MCF 10A (cell line): ENCODE measurements at regions of chr5 and their contacts with region 1.

Region 1: DNA sequence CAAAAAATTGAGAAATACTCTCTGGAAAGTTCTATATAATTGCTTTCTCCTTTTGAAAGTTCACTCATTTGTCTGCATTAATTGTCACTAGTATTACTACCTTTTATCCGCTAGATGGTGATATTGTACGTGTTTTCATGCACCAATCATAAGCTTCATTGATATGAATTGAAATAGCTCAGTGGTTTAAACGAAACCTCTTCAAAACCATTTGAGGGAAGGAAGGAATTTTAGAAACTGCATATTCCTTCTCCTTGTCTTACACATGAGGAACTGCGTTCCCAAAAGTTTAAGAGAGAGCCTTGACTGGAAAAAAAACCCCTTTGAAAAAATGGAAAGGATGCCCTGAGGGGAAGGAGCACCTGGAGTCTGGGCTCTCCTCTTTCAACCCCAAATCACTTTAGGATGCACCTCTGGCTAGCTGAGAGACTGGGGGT is 98.6 kb downstream of the YTHDC2 start:
- DNase-seq: peak; percentile 49
- H3K4me3 Mint-ChIP-seq: no peak overlapping the region
- H3K27ac Mint-ChIP-seq: no peak overlapping the region
- H3K4me1 Mint-ChIP-seq: peaks cover 5% of the 10 kb centered on the region
- H3K27me3 Mint-ChIP-seq: peaks cover 21% of the 10 kb centered on the region
- CTCF ChIP-seq: peak; percentile 61

Region 2: GRCh38 chr5:113425914-113426313 is 186.2 kb before region 1 on chr5:
- CTCF ChIA-PET with region 1: no interaction called
- POLR2A ChIA-PET with region 1: no interaction called
- intact Hi-C with region 1: no loop called
- DNase-seq: no peak
- H3K4me3 Mint-ChIP-seq: no peak overlapping the region
- H3K27ac Mint-ChIP-seq: no peak overlapping the region
- H3K4me1 Mint-ChIP-seq: peaks cover 17% of the 10 kb centered on the region
- H3K27me3 Mint-ChIP-seq: no peaks in the 10 kb centered on the region
- CTCF ChIP-seq: no peak

Region 3: DNA sequence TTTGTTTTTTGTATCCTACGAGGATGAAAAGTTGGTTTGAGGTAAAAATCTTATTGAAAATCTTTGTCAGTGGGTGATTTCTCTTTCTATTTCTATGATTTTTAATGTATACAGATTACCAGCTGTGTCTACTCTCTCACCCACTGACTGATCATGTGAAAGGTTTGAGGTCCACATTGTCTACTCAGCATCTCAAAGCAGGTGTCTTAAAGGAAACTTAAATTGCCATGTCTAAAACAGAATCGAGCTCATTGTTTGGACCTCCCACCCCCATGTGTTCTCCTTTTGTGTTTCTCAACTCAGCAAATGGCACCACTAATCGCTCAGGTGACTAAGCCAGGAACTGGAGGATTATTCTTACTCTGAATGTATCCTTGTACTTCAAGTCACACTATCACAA is 22.9 kb after region 1 on chr5:
- CTCF ChIA-PET with region 1: no interaction called
- POLR2A ChIA-PET with region 1: no interaction called
- intact Hi-C with region 1: no loop called
- DNase-seq: no peak
- H3K4me3 Mint-ChIP-seq: no peak overlapping the region
- H3K27ac Mint-ChIP-seq: no peak overlapping the region
- H3K4me1 Mint-ChIP-seq: no peaks in the 10 kb centered on the region
- H3K27me3 Mint-ChIP-seq: peaks cover 57% of the 10 kb centered on the region
- CTCF ChIP-seq: no peak

Region 4: DNA sequence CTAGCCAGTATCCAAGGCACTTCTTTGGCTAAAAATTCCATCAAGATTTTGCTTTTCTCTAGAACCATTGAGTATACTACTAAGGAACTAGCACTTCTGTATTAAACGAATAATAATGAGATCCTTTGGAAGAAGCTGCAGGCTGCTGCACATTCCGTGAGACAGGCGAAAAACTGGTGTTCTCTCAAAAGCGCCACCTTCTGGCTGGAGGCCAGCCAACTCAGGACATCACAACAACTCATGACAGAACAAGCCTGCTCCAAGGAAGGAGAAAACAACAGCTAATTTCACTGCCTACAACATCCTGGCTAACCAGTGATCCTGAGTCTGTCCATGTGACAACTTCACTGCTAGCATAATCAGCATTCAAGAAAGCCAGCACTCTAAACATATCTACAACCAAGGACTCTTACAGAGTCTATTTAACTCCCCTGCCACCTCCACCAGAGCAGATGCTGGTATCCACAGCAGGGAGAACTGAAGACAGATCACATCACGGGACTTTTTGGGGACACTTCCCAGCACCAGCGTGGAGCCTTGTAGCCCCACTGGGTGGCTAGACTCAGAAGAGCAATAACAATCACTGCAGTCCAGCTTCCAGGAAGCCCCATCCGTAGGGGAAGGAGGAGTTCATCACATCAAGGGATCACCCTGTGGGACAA is 51.9 kb after region 1 on chr5:
- CTCF ChIA-PET with region 1: interaction called, 9 read pairs
- POLR2A ChIA-PET with region 1: no interaction called
- intact Hi-C with region 1: loop called (anchors 1 kb)
- DNase-seq: peak; percentile 79
- H3K4me3 Mint-ChIP-seq: no peak overlapping the region
- H3K27ac Mint-ChIP-seq: no peak overlapping the region
- H3K4me1 Mint-ChIP-seq: peaks cover 5% of the 10 kb centered on the region
- H3K27me3 Mint-ChIP-seq: peaks cover 76% of the 10 kb centered on the region
- CTCF ChIP-seq: peak; percentile 31

Region 5: DNA sequence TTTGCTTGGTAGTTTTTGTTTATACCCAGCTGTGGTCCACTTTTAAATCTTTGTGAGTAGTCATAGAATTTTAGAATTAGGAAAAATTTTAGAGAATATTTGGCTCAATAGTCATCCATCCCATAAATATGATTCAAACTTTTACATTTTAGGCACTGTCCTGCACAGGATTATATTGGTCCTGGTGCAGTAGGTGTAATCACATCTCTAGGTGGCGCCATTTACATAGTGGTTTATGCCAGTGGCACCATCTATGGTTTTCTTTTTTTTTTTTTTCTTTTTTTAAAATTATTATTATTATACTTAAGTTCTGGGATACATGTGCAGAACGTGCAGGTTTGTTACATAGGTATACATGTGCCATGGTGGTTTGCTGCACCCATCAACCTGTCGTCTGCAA is 489.1 kb after region 1 on chr5:
- CTCF ChIA-PET with region 1: no interaction called
- POLR2A ChIA-PET with region 1: no interaction called
- intact Hi-C with region 1: loop called (anchors 1 kb)
- DNase-seq: peak; percentile 54
- H3K4me3 Mint-ChIP-seq: no peak overlapping the region
- H3K27ac Mint-ChIP-seq: no peak overlapping the region
- H3K4me1 Mint-ChIP-seq: no peaks in the 10 kb centered on the region
- H3K27me3 Mint-ChIP-seq: peaks cover 60% of the 10 kb centered on the region
- CTCF ChIP-seq: peak; percentile 52

Region 6: DNA sequence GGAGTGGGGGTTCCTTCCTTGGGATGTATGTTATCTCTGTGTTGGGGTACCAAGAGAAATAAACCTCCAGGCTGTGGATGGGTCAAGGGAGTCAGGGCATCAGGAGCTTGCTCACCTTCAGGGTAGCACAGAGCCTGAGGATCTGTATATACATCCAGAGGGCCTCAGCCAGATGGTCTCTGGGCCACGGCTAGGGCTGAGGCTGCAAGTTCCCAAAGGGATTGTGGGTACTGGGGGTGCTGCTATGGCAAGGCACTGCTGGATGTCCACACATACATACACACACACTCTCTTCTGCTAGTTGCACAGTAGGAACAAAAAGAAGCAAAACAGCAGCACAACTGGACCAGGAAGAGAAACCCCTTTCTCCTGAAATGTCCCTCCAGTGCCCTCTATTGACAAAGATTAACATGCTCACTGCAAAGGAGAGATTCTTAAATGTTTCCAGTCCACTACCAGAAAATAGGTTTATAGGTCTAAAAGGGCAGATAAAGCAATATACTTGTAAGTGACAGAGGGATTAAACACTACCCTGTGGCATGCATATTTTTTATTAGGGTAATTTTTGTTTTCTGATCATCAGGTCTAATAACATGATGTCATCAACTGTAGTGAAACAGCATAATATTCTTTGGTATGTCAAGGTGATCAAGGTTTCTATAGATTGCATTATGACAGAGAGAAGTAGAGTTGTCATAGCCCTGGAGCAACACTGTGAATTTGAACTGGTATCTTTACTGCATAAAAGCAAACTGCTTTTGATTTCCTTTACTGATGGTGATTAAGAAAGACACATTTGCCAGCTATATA is 693.5 kb after region 1 on chr5:
- CTCF ChIA-PET with region 1: no interaction called
- POLR2A ChIA-PET with region 1: no interaction called
- intact Hi-C with region 1: loop called (anchors 5 kb)
- DNase-seq: peak; percentile 29
- H3K4me3 Mint-ChIP-seq: no peak overlapping the region
- H3K27ac Mint-ChIP-seq: no peak overlapping the region
- H3K4me1 Mint-ChIP-seq: no peaks in the 10 kb centered on the region
- H3K27me3 Mint-ChIP-seq: peaks cover 52% of the 10 kb centered on the region
- CTCF ChIP-seq: peak; percentile 24

Region 7: GRCh38 chr5:114789773-114790402 is 1177.8 kb after region 1 on chr5:
- CTCF ChIA-PET with region 1: interaction called, 11 read pairs
- POLR2A ChIA-PET with region 1: no interaction called
- intact Hi-C with region 1: no loop called
- DNase-seq: peak; percentile 47
- H3K4me3 Mint-ChIP-seq: no peak overlapping the region
- H3K27ac Mint-ChIP-seq: no peak overlapping the region
- H3K4me1 Mint-ChIP-seq: no peaks in the 10 kb centered on the region
- H3K27me3 Mint-ChIP-seq: peaks cover 49% of the 10 kb centered on the region
- CTCF ChIP-seq: peak; percentile 40